ENCODE measurements at regions of chr12 and their contacts with region 1.

Region 1: GRCh38 chr12:59149997-59150642 is 229.8 kb upstream of the LRIG3 start:
- DNase-seq: peak in 1 of 5 donors; percentile 16
- ATAC-seq: peak in 3 of 4 donors; percentile 89 to 94 (median 90)
- H3K4me3 ChIP-seq: no peak overlapping the region
- H3K27ac ChIP-seq: no peak overlapping the region
- H3K4me1 ChIP-seq: no peaks in the 10 kb centered on the region
- H3K27me3 ChIP-seq: no peaks in the 10 kb centered on the region
- CTCF ChIP-seq: peak; percentile 83 to 98 (median 95)
- POLR2A ChIP-seq: no peak

Region 2: DNA sequence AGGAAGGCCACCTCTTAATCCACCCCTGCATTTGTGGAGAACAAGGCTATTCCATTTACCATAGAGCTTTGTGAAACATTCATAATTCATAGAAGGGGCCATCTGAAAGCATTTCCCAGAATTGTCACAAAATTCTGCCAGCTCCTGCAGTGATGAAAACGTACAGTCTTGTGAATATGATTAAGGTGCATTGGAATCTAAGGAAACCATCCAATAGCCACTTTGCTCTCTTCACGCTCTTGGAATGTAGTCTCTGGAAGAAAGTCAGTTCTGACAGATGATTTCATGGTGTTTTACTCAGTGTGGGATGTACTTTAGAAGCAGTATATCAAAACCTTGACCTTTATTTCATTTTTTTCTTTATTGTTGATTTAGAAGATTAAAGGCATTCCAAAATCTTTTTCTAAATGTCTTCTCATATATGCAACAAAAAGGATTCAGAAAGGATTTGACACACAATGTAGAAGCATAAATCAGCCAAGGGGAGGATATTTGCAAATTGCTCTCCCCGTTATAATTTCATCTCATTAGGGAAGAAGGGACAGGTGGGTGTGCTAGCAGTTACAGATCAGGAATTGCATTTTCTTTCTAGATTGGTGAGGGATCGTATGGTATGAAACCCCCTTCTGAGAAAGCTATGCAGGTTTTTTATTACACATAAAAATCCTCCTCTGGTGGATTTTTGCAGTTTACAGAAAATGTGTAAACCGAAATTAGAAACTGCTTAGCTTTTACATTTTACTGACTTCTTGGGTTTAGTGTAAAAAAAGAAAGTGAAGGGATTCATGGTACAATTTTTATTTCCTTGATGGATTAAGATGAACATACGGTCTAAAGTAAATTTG is 620.0 kb before region 1 on chr12:
- intact Hi-C with region 1: loop called in 4 of 10 experiments (anchors 5 to 10 kb)
- DNase-seq: no peak
- ATAC-seq: peak in 1 of 4 donors; percentile 77
- H3K4me3 ChIP-seq: no peak overlapping the region
- H3K27ac ChIP-seq: no peak overlapping the region
- H3K4me1 ChIP-seq: peaks cover 0 to 6% (median 0%) of the 10 kb centered on the region in 12 donors
- H3K27me3 ChIP-seq: no peaks in the 10 kb centered on the region
- CTCF ChIP-seq: no peak
- POLR2A ChIP-seq: no peak

Region 3: GRCh38 chr12:58540480-58541299 is 609.4 kb before region 1 on chr12:
- intact Hi-C with region 1: loop called (anchors 2 to 10 kb)
- DNase-seq: peak; percentile 43 to 67 (median 60)
- ATAC-seq: peak; percentile 82 to 91 (median 88)
- H3K4me3 ChIP-seq: no peak overlapping the region
- H3K27ac ChIP-seq: no peak overlapping the region
- H3K4me1 ChIP-seq: peaks cover 0 to 5% (median 0%) of the 10 kb centered on the region in 12 donors
- H3K27me3 ChIP-seq: no peaks in the 10 kb centered on the region
- CTCF ChIP-seq: peak; percentile 54 to 80 (median 71)
- POLR2A ChIP-seq: no peak

Region 4: GRCh38 chr12:59113831-59114615 is 36.1 kb before region 1 on chr12:
- intact Hi-C with region 1: loop called in 9 of 10 experiments (anchors 1 to 5 kb)
- DNase-seq: peak; percentile 38 to 71 (median 66)
- ATAC-seq: peak; percentile 64 to 79 (median 74)
- H3K4me3 ChIP-seq: no peak overlapping the region
- H3K27ac ChIP-seq: no peak overlapping the region
- H3K4me1 ChIP-seq: peaks cover 0 to 4% (median 0%) of the 10 kb centered on the region in 12 donors
- H3K27me3 ChIP-seq: no peaks in the 10 kb centered on the region
- CTCF ChIP-seq: peak; percentile 71 to 93 (median 84)
- POLR2A ChIP-seq: no peak